IMR-90 (cell line): ENCODE measurements at regions of chr17 and their contacts with region 1.

Region 1: DNA sequence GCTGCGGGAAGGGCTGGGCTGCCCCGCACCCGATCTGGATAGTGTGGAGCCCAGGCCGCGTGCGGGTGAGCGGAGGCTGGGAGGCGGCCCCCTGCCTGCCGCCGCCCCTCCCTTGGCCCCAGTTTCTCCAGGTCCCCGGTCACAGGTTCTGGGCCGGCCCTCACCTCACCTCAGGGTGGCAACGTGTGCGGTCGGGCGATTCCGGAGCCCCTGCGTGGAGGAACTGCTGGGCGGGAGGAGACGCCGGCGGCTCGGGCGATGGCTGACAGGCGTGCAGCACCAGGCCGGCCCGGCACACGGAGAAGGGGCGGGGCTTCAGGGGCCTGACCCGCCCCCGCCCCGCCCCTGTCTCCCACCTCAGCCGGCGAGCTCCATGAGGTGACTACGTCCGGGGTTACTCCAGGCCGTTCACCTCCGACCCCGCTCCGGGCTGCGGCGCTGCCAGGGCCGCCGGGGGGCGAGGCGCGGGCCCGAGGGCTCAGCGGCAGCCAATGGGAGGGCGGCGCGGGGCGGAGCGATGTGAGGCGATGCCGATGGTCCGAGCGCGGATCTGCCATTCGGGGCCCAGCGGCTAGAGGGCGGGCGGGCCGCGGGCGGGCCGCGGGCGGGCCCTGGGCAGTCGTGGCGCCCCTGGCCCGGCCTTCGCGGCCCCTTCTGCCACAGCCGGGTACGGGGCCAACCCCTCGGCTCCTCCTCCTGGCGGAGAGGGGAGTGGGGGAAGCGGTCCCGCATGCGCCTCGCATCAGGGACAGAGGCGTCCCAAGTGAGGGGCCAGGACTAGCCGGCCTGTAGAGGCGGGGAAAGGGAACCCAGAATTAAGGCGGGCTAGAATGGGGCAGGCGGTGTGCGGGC is 16.7 kb upstream of the C17orf78 start:
- DNase-seq: peak; percentile 86
- ATAC-seq: peak; percentile 94
- H3K4me3 ChIP-seq: peak overlapping the region; percentile 80
- H3K27ac ChIP-seq: peak overlapping the region; percentile 76
- H3K4me1 ChIP-seq: peaks cover 5% of the 10 kb centered on the region
- H3K27me3 ChIP-seq: no peaks in the 10 kb centered on the region
- CTCF ChIP-seq: peak; percentile 35; the same call in 1 of the 2 replicates
- POLR2A ChIP-seq: peak; percentile 66
- RAD21 ChIP-seq: no peak

Region 2: DNA sequence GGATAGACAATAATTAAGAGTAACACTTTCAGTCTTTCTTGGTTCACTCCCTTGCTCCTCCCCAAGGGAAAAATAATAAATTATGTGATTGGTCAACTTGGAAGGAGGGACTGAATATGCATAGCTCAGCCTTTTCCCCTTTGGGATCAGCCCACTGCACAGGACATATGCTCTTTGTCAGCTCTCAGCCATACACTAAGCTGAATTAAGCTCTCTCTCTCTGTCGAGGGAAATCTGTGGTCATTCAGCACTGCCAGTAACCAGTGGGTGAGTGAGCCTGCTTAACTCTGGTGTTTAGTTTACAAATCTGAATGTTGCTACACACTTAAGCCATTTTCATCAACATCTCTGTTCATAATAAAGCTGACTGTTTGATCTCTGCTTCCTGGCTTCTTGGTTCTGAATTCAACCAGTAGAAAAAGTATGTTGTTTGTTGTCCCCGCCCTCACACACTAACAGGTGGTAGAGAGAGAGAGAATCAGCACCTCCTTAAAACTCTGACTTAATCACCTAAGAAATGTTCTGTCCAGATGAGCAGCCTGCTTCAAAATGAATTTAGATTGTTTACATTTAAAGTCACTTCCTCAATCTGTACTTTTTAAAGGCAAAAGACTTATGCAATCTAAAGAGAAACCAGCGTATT is 85.5 kb before region 1 on chr17:
- CTCF ChIA-PET with region 1: no interaction called
- POLR2A ChIA-PET with region 1: no interaction called
- dilution Hi-C with region 1: no loop called
- in situ Hi-C with region 1: no loop called
- intact Hi-C with region 1: loop called (anchors 2 kb)
- DNase-seq: peak; percentile 84
- ATAC-seq: peak; percentile 99
- H3K4me3 ChIP-seq: no peak overlapping the region
- H3K27ac ChIP-seq: no peak overlapping the region
- H3K4me1 ChIP-seq: no peaks in the 10 kb centered on the region; the same call in 1 of the 2 replicates
- H3K27me3 ChIP-seq: no peaks in the 10 kb centered on the region
- CTCF ChIP-seq: no peak
- POLR2A ChIP-seq: no peak
- RAD21 ChIP-seq: no peak

Region 3: DNA sequence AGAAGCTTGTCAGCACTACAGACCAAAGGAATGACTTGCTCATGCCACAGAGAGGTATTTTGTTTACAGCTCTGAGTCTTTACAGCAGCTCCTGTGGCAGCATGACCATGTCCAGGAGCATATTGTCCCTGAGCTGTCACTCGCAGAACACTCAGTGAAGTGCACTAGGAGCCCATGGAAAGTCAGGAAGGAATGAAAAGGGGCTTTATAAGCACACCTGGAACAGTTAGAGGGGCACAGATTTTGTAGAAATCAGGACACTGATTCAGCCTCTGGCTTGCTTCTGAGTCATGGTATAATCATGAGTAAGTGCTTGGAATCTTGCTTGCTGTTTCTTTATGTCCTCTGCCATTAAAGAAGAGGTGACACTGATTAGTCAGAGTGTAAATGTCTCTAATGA is 88.6 kb after region 1 on chr17:
- CTCF ChIA-PET with region 1: no interaction called
- POLR2A ChIA-PET with region 1: interaction called, 10 read pairs
- dilution Hi-C with region 1: no loop called
- in situ Hi-C with region 1: no loop called
- intact Hi-C with region 1: no loop called
- DNase-seq: peak; percentile 51
- ATAC-seq: peak; percentile 83
- H3K4me3 ChIP-seq: no peak overlapping the region
- H3K27ac ChIP-seq: no peak overlapping the region
- H3K4me1 ChIP-seq: peaks cover 9% of the 10 kb centered on the region
- H3K27me3 ChIP-seq: no peaks in the 10 kb centered on the region
- CTCF ChIP-seq: no peak
- POLR2A ChIP-seq: no peak
- RAD21 ChIP-seq: no peak

Region 4: GRCh38 chr17:37592291-37592690 is 233.2 kb after region 1 on chr17:
- CTCF ChIA-PET with region 1: no interaction called
- POLR2A ChIA-PET with region 1: interaction called, 16 read pairs
- dilution Hi-C with region 1: no loop called
- in situ Hi-C with region 1: no loop called
- intact Hi-C with region 1: no loop called
- DNase-seq: peak; percentile 15
- ATAC-seq: no peak
- H3K4me3 ChIP-seq: no peak overlapping the region
- H3K27ac ChIP-seq: no peak overlapping the region
- H3K4me1 ChIP-seq: no peaks in the 10 kb centered on the region
- H3K27me3 ChIP-seq: no peaks in the 10 kb centered on the region
- CTCF ChIP-seq: no peak
- POLR2A ChIP-seq: no peak
- RAD21 ChIP-seq: no peak